Left colon (tissue), 2 donors: ENCODE measurements at regions of chr15 and their contacts with region 1.

Region 1: GRCh38 chr15:88904624-88905327 is 8.4 kb downstream of the MFGE8 start:
- DNase-seq: peak; percentile 63 to 88
- ATAC-seq: peak; percentile 90

Region 2: GRCh38 chr15:89003865-89004725 is 99.3 kb after region 1 on chr15:
- intact Hi-C with region 1: loop called in 1 of 2 experiments (anchors 10 kb)
- DNase-seq: no peak
- ATAC-seq: no peak

Region 3: DNA sequence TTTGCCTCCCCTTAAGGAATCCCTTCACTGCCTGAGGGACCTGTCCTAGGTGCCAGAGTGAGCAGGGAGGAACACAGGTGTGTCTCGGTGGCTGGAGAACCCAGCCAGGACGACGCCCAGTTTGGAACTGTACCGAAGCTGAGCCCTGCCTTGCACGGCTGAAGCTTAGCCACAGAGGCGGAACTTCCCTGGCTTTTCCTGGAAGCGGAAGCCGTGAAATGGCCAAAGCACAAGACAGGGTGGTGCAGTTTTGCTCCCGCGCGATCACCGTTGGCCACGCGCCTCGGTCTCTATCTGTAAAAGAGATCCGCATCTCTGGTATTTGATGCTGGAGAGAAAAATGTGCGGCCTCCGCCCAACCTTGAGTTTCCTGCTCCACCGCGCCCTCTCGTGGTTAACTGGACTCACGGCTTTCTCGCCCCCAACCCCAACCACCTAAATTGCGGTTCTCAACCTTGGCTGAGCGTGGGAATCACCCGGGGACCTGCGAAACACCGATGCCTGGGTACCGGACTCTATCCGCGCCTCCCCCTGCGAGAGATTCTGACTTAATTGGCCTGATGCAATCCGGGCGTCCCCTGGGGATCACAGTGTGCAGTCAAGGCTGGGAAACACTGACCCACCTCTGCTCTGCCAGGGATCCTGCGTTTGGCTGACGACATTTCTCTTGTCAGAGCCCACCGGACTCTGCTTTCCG is 112.7 kb after region 1 on chr15:
- intact Hi-C with region 1: loop called in 1 of 2 experiments (anchors 5 kb)
- DNase-seq: peak; percentile 39 to 82
- ATAC-seq: peak; percentile 77